ENCODE measurements at regions of chr11 and their contacts with region 1.

Region 1: DNA sequence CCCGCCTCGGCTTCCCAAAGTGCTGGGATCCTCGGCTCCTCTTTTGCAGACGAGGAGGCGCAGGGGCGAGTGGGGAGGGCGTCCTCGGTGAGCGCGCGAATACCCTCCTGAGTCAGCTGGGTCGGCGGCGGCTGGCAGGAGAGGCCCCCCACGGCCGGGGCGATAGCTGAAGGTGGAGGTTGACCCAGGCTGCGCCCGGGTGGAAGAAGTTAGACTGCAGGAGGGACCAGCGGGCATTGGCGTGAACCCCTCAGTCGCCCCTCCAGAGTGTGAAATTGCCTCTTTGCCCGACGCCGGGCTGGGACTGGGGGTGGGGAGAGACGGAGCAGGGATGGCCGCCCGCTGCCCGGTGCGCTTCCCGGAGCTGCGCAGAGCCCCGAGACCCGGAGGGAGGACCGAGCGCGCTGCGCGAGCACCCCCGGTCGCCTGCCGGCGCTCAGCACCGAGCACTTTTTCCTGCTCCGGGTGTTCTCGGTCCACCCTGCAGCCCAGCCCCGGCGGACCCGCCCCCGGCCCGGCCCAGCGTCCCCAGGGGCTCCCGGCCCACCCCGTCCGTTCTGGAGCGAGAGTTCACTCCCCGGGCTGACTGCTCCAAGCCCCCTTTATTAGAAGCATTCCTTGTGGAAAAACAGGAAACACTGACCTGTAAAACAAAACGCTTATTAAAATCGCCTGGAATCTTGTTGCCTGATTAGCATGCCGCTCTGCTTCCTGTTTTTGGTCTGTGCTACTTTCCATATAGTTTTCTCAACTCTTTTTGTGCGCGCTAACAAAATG is 13.7 kb upstream of the CPT1A start:
- DNase-seq: no peak
- ATAC-seq: no peak
- H3K4me3 ChIP-seq: no peak overlapping the region
- H3K27ac ChIP-seq: no peak overlapping the region
- H3K4me1 ChIP-seq: peaks cover 54% of the 10 kb centered on the region
- H3K27me3 ChIP-seq: no peaks in the 10 kb centered on the region
- CTCF ChIP-seq: no peak
- EP300 ChIP-seq: no peak
- POLR2A ChIP-seq: no peak
- RAD21 ChIP-seq: no peak

Region 2: DNA sequence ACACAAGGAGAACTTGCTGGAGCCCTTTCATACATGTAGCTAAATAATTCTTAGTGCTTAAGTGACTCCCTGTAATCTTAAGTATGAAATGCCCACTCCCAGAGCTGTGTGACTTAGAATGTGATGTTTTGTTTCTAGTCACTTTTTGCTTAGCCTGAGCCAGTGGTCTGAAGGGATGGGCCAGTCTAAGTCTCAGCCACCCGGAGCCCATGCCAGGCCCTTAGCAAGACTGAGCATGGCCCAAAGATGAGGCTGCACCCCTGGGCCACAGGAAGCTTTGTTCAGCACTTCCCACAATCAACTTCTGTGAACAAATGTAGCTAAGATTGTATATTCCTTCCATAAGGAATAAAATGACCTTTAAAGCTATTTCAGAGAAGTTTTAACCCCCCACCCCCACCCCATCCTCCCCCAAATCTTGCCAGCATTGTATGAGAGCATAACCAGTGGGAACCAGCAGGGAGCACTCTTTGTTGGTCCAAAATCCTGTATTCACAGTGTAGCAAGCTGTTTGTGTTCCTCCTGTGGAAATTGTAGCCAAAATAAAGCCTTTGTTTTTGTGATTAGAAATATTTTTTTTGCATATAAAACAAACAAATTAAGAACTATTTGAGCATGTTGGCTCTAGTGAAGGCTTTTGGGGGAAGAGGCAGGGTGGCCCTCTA is 244.8 kb before region 1 on chr11:
- CTCF ChIA-PET with region 1: no interaction called
- POLR2A ChIA-PET with region 1: no interaction called
- in situ Hi-C with region 1: no loop called
- intact Hi-C with region 1: no loop called
- DNase-seq: no peak
- ATAC-seq: peak; percentile 41; the same call in 2 of the 3 replicates
- H3K4me3 ChIP-seq: no peak overlapping the region
- H3K27ac ChIP-seq: no peak overlapping the region
- H3K4me1 ChIP-seq: no peaks in the 10 kb centered on the region; the same call in 1 of the 2 replicates
- H3K27me3 ChIP-seq: no peaks in the 10 kb centered on the region
- CTCF ChIP-seq: no peak
- EP300 ChIP-seq: no peak
- POLR2A ChIP-seq: no peak
- RAD21 ChIP-seq: no peak

Region 3: DNA sequence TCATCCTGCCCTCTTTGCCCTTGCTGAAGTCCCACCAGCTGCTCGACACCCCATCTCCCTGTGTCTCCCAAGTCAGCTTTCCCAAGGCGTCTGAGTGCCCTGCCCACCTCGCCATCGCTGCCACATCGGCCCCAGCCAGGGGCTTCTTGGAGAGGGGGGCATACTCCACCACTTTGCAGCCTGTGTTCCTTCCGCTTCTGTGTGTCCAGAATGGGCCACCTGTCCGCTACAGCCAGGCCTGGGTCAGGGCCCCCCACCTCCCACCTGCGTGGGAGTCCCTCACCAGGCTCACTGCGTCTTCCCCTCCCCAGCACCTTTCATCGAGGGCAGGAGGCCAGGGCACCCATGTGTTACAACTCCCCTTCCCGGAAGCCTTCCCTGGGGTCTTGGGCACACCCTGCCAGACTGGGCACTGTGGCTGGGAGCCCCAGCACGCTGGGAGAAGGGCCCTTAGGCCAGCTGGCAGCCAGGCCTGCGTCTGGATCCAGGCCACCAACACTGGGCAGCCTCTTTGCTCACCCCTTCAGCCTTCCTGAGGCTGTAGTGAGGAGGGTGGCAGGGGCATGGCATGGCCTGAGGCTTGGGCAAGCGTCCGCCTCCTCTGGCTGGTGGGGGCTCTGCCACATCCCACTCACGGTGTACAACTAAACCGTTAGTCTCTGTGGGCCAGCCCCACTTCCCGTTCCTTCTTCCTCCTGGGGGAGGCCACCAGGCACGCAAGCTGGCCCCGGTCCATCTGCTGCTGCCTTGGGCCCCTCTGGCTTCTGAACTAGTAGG is 27.1 kb before region 1 on chr11:
- CTCF ChIA-PET with region 1: no interaction called
- POLR2A ChIA-PET with region 1: no interaction called
- in situ Hi-C with region 1: no loop called
- intact Hi-C with region 1: no loop called
- DNase-seq: no peak
- ATAC-seq: no peak; the same call in 2 of the 3 replicates
- H3K4me3 ChIP-seq: no peak overlapping the region
- H3K27ac ChIP-seq: no peak overlapping the region
- H3K4me1 ChIP-seq: no peaks in the 10 kb centered on the region
- H3K27me3 ChIP-seq: no peaks in the 10 kb centered on the region; a peak in 1 of 5 replicates
- CTCF ChIP-seq: no peak
- EP300 ChIP-seq: no peak
- POLR2A ChIP-seq: no peak
- RAD21 ChIP-seq: no peak

Region 4: GRCh38 chr11:68839054-68839865 is 16.1 kb before region 1 on chr11:
- CTCF ChIA-PET with region 1: no interaction called
- POLR2A ChIA-PET with region 1: interaction called, 31 read pairs
- in situ Hi-C with region 1: no loop called
- intact Hi-C with region 1: loop called (anchors 2 kb)
- DNase-seq: peak; percentile 86
- ATAC-seq: peak; percentile 67
- H3K4me3 ChIP-seq: peak overlapping the region; percentile 52 to 66 (median 60)
- H3K27ac ChIP-seq: peak overlapping the region; percentile 78
- H3K4me1 ChIP-seq: peaks cover 81% of the 10 kb centered on the region
- H3K27me3 ChIP-seq: peaks cover 0 to 5% of the 10 kb centered on the region in 2 experiments; a peak in 2 of 5 replicates
- CTCF ChIP-seq: peak; percentile 7; the same call in 1 of the 2 replicates
- EP300 ChIP-seq: peak in 1 of 2 experiments; percentile 41; a peak in 1 of 4 replicates
- POLR2A ChIP-seq: peak; percentile 15 to 35; a peak in 1 of 4 replicates
- RAD21 ChIP-seq: no peak; the same call in 1 of the 2 replicates

Measured in HepG2 (cell line).